ENCODE measurements at regions of chr4 and their contacts with region 1.

Region 1: DNA sequence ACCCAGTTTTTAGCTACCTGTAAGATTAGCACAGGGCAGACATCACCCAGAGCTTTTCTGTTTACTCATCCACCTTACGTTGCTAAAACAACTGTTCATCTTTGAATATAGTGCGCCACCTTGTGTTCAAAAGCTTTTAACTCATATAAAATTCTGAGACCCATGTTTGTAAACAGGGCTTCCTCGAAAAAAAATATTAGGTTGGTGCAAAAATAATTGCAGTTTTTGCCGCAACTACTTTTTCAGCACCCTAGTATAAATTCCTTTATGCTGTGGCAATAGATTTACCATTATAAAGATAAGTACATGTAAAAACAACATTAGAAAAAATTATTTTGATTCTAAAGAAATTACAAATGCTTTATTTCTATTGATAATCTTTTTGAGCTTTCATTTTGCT is 147.9 kb downstream of the LRBA start:
- DNase-seq: peak; percentile 76
- ATAC-seq: peak; percentile 83
- H3K4me3 ChIP-seq: no peak overlapping the region
- H3K27ac ChIP-seq: no peak overlapping the region
- H3K4me1 ChIP-seq: no peaks in the 10 kb centered on the region
- H3K27me3 ChIP-seq: no peaks in the 10 kb centered on the region
- CTCF ChIP-seq: peak; percentile 71
- EP300 ChIP-seq: no peak
- POLR2A ChIP-seq: no peak
- RAD21 ChIP-seq: peak; percentile 53; the same call in 1 of the 2 replicates

Region 2: DNA sequence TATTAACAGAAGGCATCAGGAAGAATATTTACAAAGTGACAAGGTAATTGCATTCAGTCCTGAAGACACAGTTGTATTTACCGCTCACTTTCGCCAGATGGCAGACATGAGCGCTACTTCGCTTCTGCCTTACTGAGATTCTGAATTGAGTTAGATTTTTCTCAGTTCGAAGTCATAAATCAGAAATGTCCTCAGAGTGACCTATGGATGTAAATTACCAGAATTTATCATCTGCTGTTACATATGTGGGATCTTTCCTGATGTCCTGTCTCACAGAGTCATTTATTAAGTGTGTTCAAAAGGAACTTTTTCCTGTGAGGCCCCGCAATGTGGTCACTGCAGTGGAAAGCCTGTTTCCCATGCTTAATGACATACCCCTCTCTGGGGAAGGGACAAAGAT is 886.2 kb before region 1 on chr4:
- CTCF ChIA-PET with region 1: no interaction called
- POLR2A ChIA-PET with region 1: no interaction called
- in situ Hi-C with region 1: loop called (anchors 25 kb)
- intact Hi-C with region 1: loop called (anchors 5 kb)
- DNase-seq: peak; percentile 26
- ATAC-seq: peak; percentile 65
- H3K4me3 ChIP-seq: no peak overlapping the region
- H3K27ac ChIP-seq: no peak overlapping the region
- H3K4me1 ChIP-seq: no peaks in the 10 kb centered on the region
- H3K27me3 ChIP-seq: no peaks in the 10 kb centered on the region; a peak in 1 of 5 replicates
- CTCF ChIP-seq: peak; percentile 72
- EP300 ChIP-seq: no peak
- POLR2A ChIP-seq: no peak
- RAD21 ChIP-seq: peak; percentile 21; the same call in 1 of the 2 replicates

Region 3: DNA sequence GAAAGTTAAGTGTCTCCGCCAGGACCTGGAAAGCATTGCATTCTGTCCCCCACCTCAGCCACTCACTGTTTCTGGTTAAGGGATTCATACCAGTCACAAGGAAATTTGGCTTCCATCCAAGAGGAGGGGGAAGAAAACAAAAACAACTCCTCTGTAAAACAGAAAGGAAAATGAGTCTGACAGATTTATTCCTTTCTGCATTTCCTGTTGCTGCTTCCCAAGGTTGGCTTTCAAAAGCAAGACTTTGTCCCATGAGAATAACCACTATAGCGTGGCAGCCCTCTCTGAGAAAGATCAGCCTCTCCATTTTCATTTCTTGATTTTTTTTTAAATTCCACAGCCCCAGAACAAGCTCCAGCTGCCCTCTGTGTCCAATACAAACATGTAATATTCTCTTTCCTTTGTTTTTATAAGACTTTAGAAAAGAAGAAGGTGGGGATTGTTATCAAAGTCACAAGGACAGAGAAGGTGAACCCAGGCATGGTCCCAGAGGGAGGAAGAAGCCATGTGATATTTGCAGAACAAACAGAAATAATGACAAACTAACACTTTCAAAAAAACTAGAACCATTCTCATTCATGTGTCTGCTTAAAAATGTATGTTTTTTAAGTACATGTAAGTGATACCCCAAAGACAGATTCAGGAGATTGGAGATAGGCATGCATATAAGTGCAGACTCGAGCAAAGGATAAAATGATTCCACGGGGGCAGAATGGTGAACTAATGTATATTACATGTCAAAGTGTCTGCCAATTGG is 879.6 kb before region 1 on chr4:
- CTCF ChIA-PET with region 1: no interaction called
- POLR2A ChIA-PET with region 1: no interaction called
- in situ Hi-C with region 1: loop called (anchors 25 kb)
- intact Hi-C with region 1: loop called (anchors 5 kb)
- DNase-seq: no peak
- ATAC-seq: no peak
- H3K4me3 ChIP-seq: no peak overlapping the region
- H3K27ac ChIP-seq: no peak overlapping the region
- H3K4me1 ChIP-seq: no peaks in the 10 kb centered on the region
- H3K27me3 ChIP-seq: no peaks in the 10 kb centered on the region; a peak in 1 of 5 replicates
- CTCF ChIP-seq: no peak
- EP300 ChIP-seq: no peak
- POLR2A ChIP-seq: no peak
- RAD21 ChIP-seq: no peak

Region 4: GRCh38 chr4:150248181-150248580 is 619.0 kb before region 1 on chr4:
- CTCF ChIA-PET with region 1: interaction called, 3 read pairs
- POLR2A ChIA-PET with region 1: no interaction called
- in situ Hi-C with region 1: no loop called
- intact Hi-C with region 1: loop called (anchors 2 kb)
- DNase-seq: peak; percentile 35
- ATAC-seq: peak; percentile 79
- H3K4me3 ChIP-seq: peak overlapping the region in 1 of 3 experiments; percentile 1; a peak in 1 of 6 replicates
- H3K27ac ChIP-seq: no peak overlapping the region
- H3K4me1 ChIP-seq: peaks cover 19% of the 10 kb centered on the region
- H3K27me3 ChIP-seq: no peaks in the 10 kb centered on the region
- CTCF ChIP-seq: peak; percentile 78
- EP300 ChIP-seq: no peak
- POLR2A ChIP-seq: no peak
- RAD21 ChIP-seq: no peak

Region 5: GRCh38 chr4:150297861-150298474 is 569.2 kb before region 1 on chr4:
- CTCF ChIA-PET with region 1: interaction called, 8 read pairs
- POLR2A ChIA-PET with region 1: no interaction called
- in situ Hi-C with region 1: loop called (anchors 5 kb)
- intact Hi-C with region 1: loop called (anchors 1 kb)
- DNase-seq: peak; percentile 41
- ATAC-seq: peak; percentile 51; the same call in 2 of the 3 replicates
- H3K4me3 ChIP-seq: no peak overlapping the region
- H3K27ac ChIP-seq: no peak overlapping the region
- H3K4me1 ChIP-seq: no peaks in the 10 kb centered on the region
- H3K27me3 ChIP-seq: no peaks in the 10 kb centered on the region
- CTCF ChIP-seq: peak; percentile 67
- EP300 ChIP-seq: no peak
- POLR2A ChIP-seq: no peak
- RAD21 ChIP-seq: 0 out of 2 replicates have a peak, but pooled peaks have one; percentile 14

Region 6: GRCh38 chr4:150943818-150944217 is 76.7 kb after region 1 on chr4:
- CTCF ChIA-PET with region 1: no interaction called
- POLR2A ChIA-PET with region 1: no interaction called
- in situ Hi-C with region 1: no loop called
- intact Hi-C with region 1: no loop called
- DNase-seq: no peak
- ATAC-seq: no peak
- H3K4me3 ChIP-seq: no peak overlapping the region
- H3K27ac ChIP-seq: no peak overlapping the region
- H3K4me1 ChIP-seq: no peaks in the 10 kb centered on the region
- H3K27me3 ChIP-seq: no peaks in the 10 kb centered on the region; a peak in 1 of 5 replicates
- CTCF ChIP-seq: no peak
- EP300 ChIP-seq: no peak
- POLR2A ChIP-seq: no peak
- RAD21 ChIP-seq: no peak

Region 7: DNA sequence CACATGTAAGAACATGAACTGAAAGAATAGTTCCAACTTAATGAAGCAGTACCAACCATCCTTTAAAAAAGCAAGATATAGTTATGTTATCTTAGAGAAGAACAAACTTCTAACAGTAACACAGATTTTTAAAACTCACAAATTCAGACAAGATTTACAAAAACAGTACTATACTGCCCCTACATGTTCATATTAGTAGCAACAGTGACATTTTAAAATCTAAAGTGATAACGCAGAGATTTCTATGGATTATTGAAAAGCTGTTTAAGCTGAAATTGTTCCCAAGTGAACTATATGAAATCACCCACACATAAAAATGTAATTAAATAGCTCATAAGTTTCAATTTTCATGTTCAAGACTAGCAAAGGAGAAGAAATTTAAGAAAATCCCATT is 1502.8 kb after region 1 on chr4:
- CTCF ChIA-PET with region 1: no interaction called
- POLR2A ChIA-PET with region 1: no interaction called
- in situ Hi-C with region 1: no loop called
- intact Hi-C with region 1: no loop called
- DNase-seq: no peak
- ATAC-seq: no peak
- H3K4me3 ChIP-seq: no peak overlapping the region
- H3K27ac ChIP-seq: no peak overlapping the region
- H3K4me1 ChIP-seq: no peaks in the 10 kb centered on the region
- H3K27me3 ChIP-seq: no peaks in the 10 kb centered on the region
- CTCF ChIP-seq: no peak
- EP300 ChIP-seq: no peak
- POLR2A ChIP-seq: no peak
- RAD21 ChIP-seq: no peak

Measured in HepG2 (cell line).